ENCODE measurements at regions of chr14 and their contacts with region 1.

Region 1: GRCh38 chr14:22556990-22557623 is 31.9 kb downstream of the DAD1 start:
- DNase-seq: peak; percentile 83 to 98 (median 92)
- ATAC-seq: peak; percentile 24
- H3K4me3 ChIP-seq: peak overlapping the region; percentile 58
- H3K4me3 Mint-ChIP-seq: peak overlapping the region; percentile 96
- H3K27ac ChIP-seq: peak overlapping the region; percentile 99
- H3K27ac Mint-ChIP-seq: peak overlapping the region; percentile 97
- H3K4me1 ChIP-seq: peaks cover 100% of the 10 kb centered on the region
- H3K4me1 Mint-ChIP-seq: peaks cover 93% of the 10 kb centered on the region
- H3K27me3 ChIP-seq: no peaks in the 10 kb centered on the region
- H3K27me3 Mint-ChIP-seq: peaks cover 6% of the 10 kb centered on the region
- CTCF ChIP-seq: peak; percentile 100

Region 2: GRCh38 chr14:21796916-21797315 is 760.2 kb before region 1 on chr14:
- CTCF ChIA-PET with region 1: no interaction called
- POLR2A ChIA-PET with region 1: no interaction called
- intact Hi-C with region 1: no loop called
- DNase-seq: peak in 5 of 14 experiments; percentile 5 to 56 (median 41)
- ATAC-seq: peak; percentile 48
- H3K4me3 ChIP-seq: peak overlapping the region; percentile 27
- H3K4me3 Mint-ChIP-seq: peak overlapping the region; percentile 80
- H3K27ac ChIP-seq: no peak overlapping the region
- H3K27ac Mint-ChIP-seq: peak overlapping the region; percentile 74
- H3K4me1 ChIP-seq: no peaks in the 10 kb centered on the region
- H3K4me1 Mint-ChIP-seq: peaks cover 6% of the 10 kb centered on the region
- H3K27me3 ChIP-seq: no peaks in the 10 kb centered on the region
- H3K27me3 Mint-ChIP-seq: peaks cover 17% of the 10 kb centered on the region
- CTCF ChIP-seq: no peak

Region 3: DNA sequence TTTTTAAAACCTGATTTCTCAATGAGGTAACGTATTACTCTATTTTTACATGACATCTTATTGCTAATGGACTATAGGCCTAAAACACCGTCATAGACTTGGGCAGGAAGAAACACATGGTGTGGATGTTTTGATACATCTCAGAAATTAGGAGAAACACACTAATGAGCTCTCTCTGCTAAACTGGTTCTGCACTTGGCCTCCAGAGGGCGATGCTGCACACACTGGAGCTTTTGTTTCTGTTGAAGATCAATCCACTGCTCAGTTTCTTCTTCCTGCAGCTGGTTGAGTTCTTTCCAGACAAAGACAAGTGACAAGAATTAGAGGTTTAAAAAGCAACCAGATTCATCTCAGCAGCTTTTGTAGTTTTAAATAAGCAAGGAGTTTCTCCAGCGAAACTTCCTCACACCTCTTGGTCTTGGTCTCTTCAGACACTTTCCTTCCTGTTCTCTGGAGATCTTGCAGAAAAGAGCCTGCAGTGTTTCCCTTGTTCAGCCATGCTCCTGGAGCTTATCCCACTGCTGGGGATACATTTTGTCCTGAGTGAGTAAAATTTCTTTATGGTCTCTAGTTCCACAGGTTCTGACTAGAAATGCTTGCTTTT is 704.9 kb before region 1 on chr14:
- CTCF ChIA-PET with region 1: interaction called, 6 read pairs
- POLR2A ChIA-PET with region 1: interaction called, 29 read pairs
- intact Hi-C with region 1: loop called in 1 of 2 experiments (anchors 5 kb)
- DNase-seq: peak; percentile 63 to 86 (median 70)
- ATAC-seq: peak; percentile 82
- H3K4me3 ChIP-seq: peak overlapping the region; percentile 51
- H3K4me3 Mint-ChIP-seq: peak overlapping the region; percentile 88
- H3K27ac ChIP-seq: peak overlapping the region in 1 of 2 donors; percentile 37
- H3K27ac Mint-ChIP-seq: peak overlapping the region; percentile 69
- H3K4me1 ChIP-seq: no peaks in the 10 kb centered on the region
- H3K4me1 Mint-ChIP-seq: peaks cover 18% of the 10 kb centered on the region
- H3K27me3 ChIP-seq: no peaks in the 10 kb centered on the region
- H3K27me3 Mint-ChIP-seq: peaks cover 17% of the 10 kb centered on the region
- CTCF ChIP-seq: peak; percentile 80

Region 4: GRCh38 chr14:21997300-21997699 is 559.8 kb before region 1 on chr14:
- CTCF ChIA-PET with region 1: interaction called, 16 read pairs
- POLR2A ChIA-PET with region 1: interaction called, 23 read pairs
- intact Hi-C with region 1: loop called (anchors 5 to 10 kb)
- DNase-seq: peak in 7 of 14 experiments; percentile 16 to 77 (median 47)
- ATAC-seq: peak; percentile 90
- H3K4me3 ChIP-seq: peak overlapping the region; percentile 56
- H3K4me3 Mint-ChIP-seq: peak overlapping the region; percentile 95
- H3K27ac ChIP-seq: no peak overlapping the region
- H3K27ac Mint-ChIP-seq: peak overlapping the region; percentile 88
- H3K4me1 ChIP-seq: peaks cover under 1% of the 10 kb centered on the region
- H3K4me1 Mint-ChIP-seq: peaks cover 27% of the 10 kb centered on the region
- H3K27me3 ChIP-seq: no peaks in the 10 kb centered on the region
- H3K27me3 Mint-ChIP-seq: no peaks in the 10 kb centered on the region
- CTCF ChIP-seq: no peak

Region 5: DNA sequence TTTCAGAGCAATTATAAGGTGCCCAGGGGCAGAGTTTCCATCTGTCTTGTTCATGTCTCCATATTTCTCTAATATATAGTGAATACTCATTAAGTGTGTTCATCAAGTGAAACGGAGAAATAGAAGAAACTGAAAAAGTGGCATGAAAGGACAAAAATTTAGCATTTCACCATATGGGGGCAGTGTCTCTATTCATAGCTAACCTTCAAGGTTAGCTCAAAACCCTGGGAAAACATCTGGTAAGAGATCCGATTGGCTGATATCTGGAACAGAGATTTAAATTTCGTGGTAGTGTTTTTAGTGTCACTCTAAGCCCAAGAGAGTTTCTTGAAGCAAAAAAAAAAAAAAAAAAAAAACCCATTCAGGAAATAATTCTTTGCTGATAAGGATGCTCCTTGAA is 335.6 kb before region 1 on chr14:
- CTCF ChIA-PET with region 1: interaction called, 8 read pairs
- POLR2A ChIA-PET with region 1: interaction called, 3 read pairs
- intact Hi-C with region 1: loop called (anchors 10 kb)
- DNase-seq: peak in 3 of 14 experiments; percentile 39 to 51 (median 39)
- ATAC-seq: peak; percentile 41
- H3K4me3 ChIP-seq: no peak overlapping the region
- H3K4me3 Mint-ChIP-seq: peak overlapping the region; percentile 73
- H3K27ac ChIP-seq: no peak overlapping the region
- H3K27ac Mint-ChIP-seq: peak overlapping the region; percentile 67
- H3K4me1 ChIP-seq: no peaks in the 10 kb centered on the region
- H3K4me1 Mint-ChIP-seq: peaks cover 17% of the 10 kb centered on the region
- H3K27me3 ChIP-seq: no peaks in the 10 kb centered on the region
- H3K27me3 Mint-ChIP-seq: no peaks in the 10 kb centered on the region
- CTCF ChIP-seq: peak; percentile 12

Region 6: DNA sequence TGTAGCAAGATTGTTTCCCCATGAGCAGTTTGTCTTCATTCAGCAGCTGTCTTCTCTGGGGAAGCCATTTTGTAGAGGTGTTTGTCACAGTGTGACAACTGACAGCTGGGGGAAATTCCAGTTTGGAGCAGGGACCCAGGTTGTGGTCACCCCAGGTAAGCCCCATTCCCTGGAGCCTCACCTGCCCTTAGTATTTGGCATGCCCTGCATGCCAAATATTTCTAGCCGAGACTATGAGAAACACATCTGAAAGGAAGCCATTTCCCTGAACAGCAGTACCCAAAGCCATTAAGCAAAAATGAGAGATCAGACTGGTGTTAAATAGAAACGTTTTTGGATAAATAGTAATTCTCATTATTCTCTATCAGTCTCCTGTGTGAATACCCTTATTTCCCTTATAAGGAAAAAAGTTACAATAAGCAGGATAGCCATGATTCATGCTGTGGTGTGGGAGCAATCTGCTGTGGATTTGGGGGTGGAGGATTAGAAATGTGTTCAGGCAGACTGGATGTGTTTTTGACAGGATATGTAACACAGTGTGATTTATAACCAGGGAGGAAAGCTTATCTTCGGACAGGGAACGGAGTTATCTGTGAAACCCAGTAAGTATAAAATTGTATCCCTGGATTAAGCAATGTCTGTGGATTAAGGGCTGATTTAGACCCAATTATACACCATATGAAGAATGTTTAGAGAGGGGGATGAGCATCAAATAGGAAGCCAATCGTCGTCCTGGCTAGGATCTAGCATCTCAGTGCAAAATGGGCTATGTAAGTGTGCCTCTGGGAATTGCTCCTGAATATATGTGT is 37.0 kb before region 1 on chr14:
- CTCF ChIA-PET with region 1: interaction called, 41 read pairs
- POLR2A ChIA-PET with region 1: interaction called, 613 read pairs
- intact Hi-C with region 1: loop called in 1 of 2 experiments (anchors 5 kb)
- DNase-seq: peak in 2 of 14 experiments; percentile 30 to 61
- ATAC-seq: peak; percentile 19
- H3K4me3 ChIP-seq: peak overlapping the region; percentile 61
- H3K4me3 Mint-ChIP-seq: peak overlapping the region; percentile 86
- H3K27ac ChIP-seq: peak overlapping the region; percentile 85 to 99
- H3K27ac Mint-ChIP-seq: peak overlapping the region; percentile 93
- H3K4me1 ChIP-seq: peaks cover 89% of the 10 kb centered on the region
- H3K4me1 Mint-ChIP-seq: peaks cover 100% of the 10 kb centered on the region
- H3K27me3 ChIP-seq: no peaks in the 10 kb centered on the region
- H3K27me3 Mint-ChIP-seq: no peaks in the 10 kb centered on the region
- CTCF ChIP-seq: no peak

Region 7: GRCh38 chr14:22713631-22713950 is 156.5 kb after region 1 on chr14:
- CTCF ChIA-PET with region 1: no interaction called
- POLR2A ChIA-PET with region 1: interaction called, 3 read pairs
- intact Hi-C with region 1: loop called in 1 of 2 experiments (anchors 2 kb)
- DNase-seq: no peak
- ATAC-seq: no peak
- H3K4me3 ChIP-seq: peak overlapping the region; percentile 45
- H3K4me3 Mint-ChIP-seq: peak overlapping the region; percentile 81
- H3K27ac ChIP-seq: no peak overlapping the region
- H3K27ac Mint-ChIP-seq: no peak overlapping the region
- H3K4me1 ChIP-seq: peaks cover 7% of the 10 kb centered on the region
- H3K4me1 Mint-ChIP-seq: peaks cover 15% of the 10 kb centered on the region
- H3K27me3 ChIP-seq: peaks cover 23 to 30% of the 10 kb centered on the region in 2 experiments
- H3K27me3 Mint-ChIP-seq: peaks cover 51% of the 10 kb centered on the region
- CTCF ChIP-seq: no peak

Region 8: GRCh38 chr14:22986508-22987054 is 429.5 kb after region 1 on chr14:
- CTCF ChIA-PET with region 1: interaction called, 4 read pairs
- POLR2A ChIA-PET with region 1: interaction called, 6 read pairs
- intact Hi-C with region 1: loop called (anchors 1 to 5 kb)
- DNase-seq: peak; percentile 81 to 96 (median 88)
- ATAC-seq: peak; percentile 67
- H3K4me3 ChIP-seq: no peak overlapping the region
- H3K4me3 Mint-ChIP-seq: peak overlapping the region; percentile 3
- H3K27ac ChIP-seq: no peak overlapping the region
- H3K27ac Mint-ChIP-seq: no peak overlapping the region
- H3K4me1 ChIP-seq: peaks cover 17% of the 10 kb centered on the region
- H3K4me1 Mint-ChIP-seq: peaks cover 3% of the 10 kb centered on the region
- H3K27me3 ChIP-seq: peaks cover 0 to 5% of the 10 kb centered on the region in 2 experiments
- H3K27me3 Mint-ChIP-seq: no peaks in the 10 kb centered on the region
- CTCF ChIP-seq: peak; percentile 95